Activated CD4-positive, alpha-beta T cell treated with anti-CD3 and anti-CD28 coated beads, Interleukin-2, amount 10 ng/mL, durations not matched to agents 24 days and 14 days (primary cell): ENCODE measurements at regions of chr16 and their contacts with region 1.

Region 1: GRCh38 chr16:15704545-15704987 is 54.5 kb downstream of the NDE1 start:
- DNase-seq: peak; percentile 92
- H3K4me3 Mint-ChIP-seq: no peak overlapping the region
- H3K27ac Mint-ChIP-seq: peak overlapping the region; percentile 49
- H3K4me1 Mint-ChIP-seq: peaks cover 13% of the 10 kb centered on the region
- H3K27me3 Mint-ChIP-seq: no peaks in the 10 kb centered on the region

Region 2: DNA sequence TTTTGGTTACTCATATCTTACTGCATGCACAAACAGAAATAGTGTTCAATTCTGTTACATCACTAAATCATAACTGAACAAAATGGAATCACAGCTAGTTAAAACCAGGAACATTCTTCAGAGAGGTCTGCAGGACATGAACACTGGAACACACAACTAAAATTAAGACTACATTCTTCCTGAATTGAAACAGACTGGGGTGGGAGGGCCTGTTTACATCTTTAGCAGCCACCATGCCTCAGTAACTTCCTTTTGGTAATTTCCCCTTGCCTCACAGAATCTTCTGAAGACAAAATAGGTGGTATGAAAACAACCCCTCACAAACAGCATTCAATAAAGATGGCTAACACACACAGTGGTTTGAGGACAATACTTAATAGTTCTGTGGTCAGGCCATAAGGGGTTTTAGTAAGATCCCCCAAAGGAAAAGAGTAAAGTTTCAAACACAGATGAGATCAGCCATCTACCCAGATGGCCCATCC is 68.1 kb before region 1 on chr16:
- intact Hi-C with region 1: loop called (anchors 5 kb)
- DNase-seq: peak; percentile 71
- H3K4me3 Mint-ChIP-seq: peak overlapping the region; percentile 66
- H3K27ac Mint-ChIP-seq: peak overlapping the region; percentile 91
- H3K4me1 Mint-ChIP-seq: peaks cover 59% of the 10 kb centered on the region
- H3K27me3 Mint-ChIP-seq: no peaks in the 10 kb centered on the region

Region 3: GRCh38 chr16:15650019-15650697 is 54.4 kb before region 1 on chr16 and contains the start of gene NDE1:
- intact Hi-C with region 1: loop called (anchors 5 kb)
- DNase-seq: peak; percentile 96
- H3K4me3 Mint-ChIP-seq: peak within 1 kb of the TSS; percentile 100
- H3K27ac Mint-ChIP-seq: peak within 1 kb of the TSS; percentile 100
- H3K4me1 Mint-ChIP-seq: peaks cover 22% of the 10 kb centered on the region
- H3K27me3 Mint-ChIP-seq: no peaks in the 10 kb centered on the region
- total RNA-seq, gene NDE1: 85.4 and 85.8 TPM in 2 replicates